MCF 10A (cell line): ENCODE measurements at regions of chr1 and their contacts with region 1.

Region 1: GRCh38 chr1:223700942-223701637 is 11.2 kb upstream of the CAPN2 start:
- DNase-seq: peak; percentile 97
- H3K4me3 Mint-ChIP-seq: peak overlapping the region; percentile 47
- H3K27ac Mint-ChIP-seq: peak overlapping the region; percentile 97
- H3K4me1 Mint-ChIP-seq: peaks cover 61% of the 10 kb centered on the region
- H3K27me3 Mint-ChIP-seq: no peaks in the 10 kb centered on the region
- CTCF ChIP-seq: no peak

Region 2: GRCh38 chr1:223269006-223269405 is 432.1 kb before region 1 on chr1:
- CTCF ChIA-PET with region 1: no interaction called
- POLR2A ChIA-PET with region 1: no interaction called
- intact Hi-C with region 1: no loop called
- DNase-seq: no peak
- H3K4me3 Mint-ChIP-seq: no peak overlapping the region
- H3K27ac Mint-ChIP-seq: no peak overlapping the region
- H3K4me1 Mint-ChIP-seq: no peaks in the 10 kb centered on the region
- H3K27me3 Mint-ChIP-seq: no peaks in the 10 kb centered on the region
- CTCF ChIP-seq: no peak

Region 3: GRCh38 chr1:223712194-223712849 is 11.2 kb after region 1 on chr1 and contains the start of gene CAPN2:
- CTCF ChIA-PET with region 1: interaction called, 53 read pairs
- POLR2A ChIA-PET with region 1: interaction called, 105 read pairs
- intact Hi-C with region 1: no loop called
- DNase-seq: peak; percentile 94
- H3K4me3 Mint-ChIP-seq: peak within 1 kb of the TSS; percentile 77
- H3K27ac Mint-ChIP-seq: peak within 1 kb of the TSS; percentile 88
- H3K4me1 Mint-ChIP-seq: peaks cover 61% of the 10 kb centered on the region
- H3K27me3 Mint-ChIP-seq: no peaks in the 10 kb centered on the region
- CTCF ChIP-seq: peak; percentile 98
- total RNA-seq, gene CAPN2: 513 and 622 TPM in 2 replicates

Region 4: GRCh38 chr1:223738465-223739365 is 37.6 kb after region 1 on chr1:
- CTCF ChIA-PET with region 1: interaction called, 16 read pairs
- POLR2A ChIA-PET with region 1: interaction called, 64 read pairs
- intact Hi-C with region 1: loop called (anchors 2 kb)
- DNase-seq: peak; percentile 72
- H3K4me3 Mint-ChIP-seq: no peak overlapping the region
- H3K27ac Mint-ChIP-seq: peak overlapping the region; percentile 82
- H3K4me1 Mint-ChIP-seq: peaks cover 42% of the 10 kb centered on the region
- H3K27me3 Mint-ChIP-seq: no peaks in the 10 kb centered on the region
- CTCF ChIP-seq: no peak

Region 5: DNA sequence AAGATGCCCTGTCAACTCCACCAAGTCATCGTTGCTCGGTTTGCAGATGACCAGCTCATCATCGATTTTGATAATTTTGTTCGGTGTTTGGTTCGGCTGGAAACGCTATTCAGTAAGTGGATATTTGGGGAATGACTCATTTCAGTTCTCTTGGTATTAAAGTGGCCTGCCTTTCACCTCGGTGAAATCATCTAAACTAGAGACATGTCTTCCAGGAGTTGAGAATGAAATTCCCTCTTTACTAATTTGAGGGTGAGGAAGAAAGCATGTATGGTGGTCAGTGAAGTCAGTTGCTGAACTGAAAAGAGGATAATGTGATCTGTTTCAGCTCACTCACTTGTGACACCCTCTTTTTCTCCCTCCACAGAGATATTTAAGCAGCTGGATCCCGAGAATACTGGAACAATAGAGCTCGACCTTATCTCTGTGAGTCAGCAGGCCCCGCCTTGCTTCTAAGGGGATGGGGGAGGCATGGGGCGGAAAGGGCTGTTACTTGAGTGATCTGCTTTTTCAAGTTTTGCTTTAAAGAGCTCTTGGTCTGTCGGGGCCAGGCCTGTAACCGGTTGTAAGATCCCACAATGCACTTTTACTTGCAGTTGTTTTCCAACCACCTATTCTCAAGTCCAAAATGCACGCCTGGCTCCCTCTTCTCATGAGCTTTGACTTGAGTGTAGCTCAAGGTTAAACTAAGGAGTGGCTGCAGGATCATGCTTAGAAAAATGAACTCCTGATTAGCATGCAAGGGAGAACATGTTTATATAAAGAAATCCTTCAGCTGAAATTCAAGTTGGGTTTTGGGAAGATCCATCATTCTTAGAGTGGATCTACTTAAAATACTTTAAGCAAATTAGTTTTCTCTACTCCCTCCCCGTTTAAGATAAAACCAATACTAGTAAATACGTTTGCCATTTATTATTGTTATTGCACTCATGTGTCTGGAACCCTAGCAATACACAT is 71.0 kb after region 1 on chr1:
- CTCF ChIA-PET with region 1: interaction called, 21 read pairs
- POLR2A ChIA-PET with region 1: interaction called, 71 read pairs
- intact Hi-C with region 1: loop called (anchors 1 kb)
- DNase-seq: peak; percentile 82
- H3K4me3 Mint-ChIP-seq: peak overlapping the region; percentile 52
- H3K27ac Mint-ChIP-seq: peak overlapping the region; percentile 92
- H3K4me1 Mint-ChIP-seq: peaks cover 69% of the 10 kb centered on the region
- H3K27me3 Mint-ChIP-seq: no peaks in the 10 kb centered on the region
- CTCF ChIP-seq: no peak

Region 6: GRCh38 chr1:223845810-223846682 is 145.0 kb after region 1 on chr1 and contains the start of gene TP53BP2:
- CTCF ChIA-PET with region 1: interaction called, 6 read pairs
- POLR2A ChIA-PET with region 1: interaction called, 81 read pairs
- intact Hi-C with region 1: loop called (anchors 2 kb)
- DNase-seq: peak; percentile 95
- H3K4me3 Mint-ChIP-seq: peak within 1 kb of the TSS; percentile 87
- H3K27ac Mint-ChIP-seq: peak within 1 kb of the TSS; percentile 100
- H3K4me1 Mint-ChIP-seq: peaks cover 21% of the 10 kb centered on the region
- H3K27me3 Mint-ChIP-seq: no peaks in the 10 kb centered on the region
- CTCF ChIP-seq: peak; percentile 90
- total RNA-seq, gene TP53BP2: 62.4 and 64.0 TPM in 2 replicates

Region 7: GRCh38 chr1:224106568-224107281 is 405.6 kb after region 1 on chr1:
- CTCF ChIA-PET with region 1: interaction called, 26 read pairs
- POLR2A ChIA-PET with region 1: interaction called, 6 read pairs
- intact Hi-C with region 1: loop called (anchors 1 kb)
- DNase-seq: peak; percentile 78
- H3K4me3 Mint-ChIP-seq: peak overlapping the region; percentile 35
- H3K27ac Mint-ChIP-seq: peak overlapping the region; percentile 29
- H3K4me1 Mint-ChIP-seq: peaks cover 7% of the 10 kb centered on the region
- H3K27me3 Mint-ChIP-seq: no peaks in the 10 kb centered on the region
- CTCF ChIP-seq: peak; percentile 55